CD14-positive monocyte (primary cell): ENCODE measurements at regions of chr11 and their contacts with region 1.

Region 1: GRCh38 chr11:45105233-45105983 is 41.0 kb upstream of the PRDM11 start:
- DNase-seq: peak; percentile 51 to 66 (median 62)
- H3K4me3 ChIP-seq: no peak overlapping the region
- H3K4me3 Mint-ChIP-seq: no peak overlapping the region
- H3K27ac ChIP-seq: no peak overlapping the region
- H3K27ac Mint-ChIP-seq: peak overlapping the region in 1 of 7 donors; percentile 60
- H3K4me1 ChIP-seq: peaks cover 11 to 14% of the 10 kb centered on the region in 2 donors
- H3K4me1 Mint-ChIP-seq: peaks cover 24% of the 10 kb centered on the region
- H3K27me3 ChIP-seq: no peaks in the 10 kb centered on the region
- H3K27me3 Mint-ChIP-seq: peaks cover 1 to 5% (median 3%) of the 10 kb centered on the region in 3 donors
- CTCF ChIP-seq: peak; percentile 99

Region 2: GRCh38 chr11:44927174-44927661 is 178.2 kb before region 1 on chr11:
- intact Hi-C with region 1: loop called in 1 of 2 experiments (anchors 2 kb)
- DNase-seq: peak; percentile 37 to 56 (median 44)
- H3K4me3 ChIP-seq: no peak overlapping the region
- H3K4me3 Mint-ChIP-seq: peak overlapping the region in 1 of 2 donors; percentile 42
- H3K27ac ChIP-seq: no peak overlapping the region
- H3K27ac Mint-ChIP-seq: no peak overlapping the region
- H3K4me1 ChIP-seq: no peaks in the 10 kb centered on the region
- H3K4me1 Mint-ChIP-seq: no peaks in the 10 kb centered on the region
- H3K27me3 ChIP-seq: no peaks in the 10 kb centered on the region
- H3K27me3 Mint-ChIP-seq: peaks cover 5 to 14% (median 9%) of the 10 kb centered on the region in 3 donors
- CTCF ChIP-seq: peak; percentile 96

Region 3: DNA sequence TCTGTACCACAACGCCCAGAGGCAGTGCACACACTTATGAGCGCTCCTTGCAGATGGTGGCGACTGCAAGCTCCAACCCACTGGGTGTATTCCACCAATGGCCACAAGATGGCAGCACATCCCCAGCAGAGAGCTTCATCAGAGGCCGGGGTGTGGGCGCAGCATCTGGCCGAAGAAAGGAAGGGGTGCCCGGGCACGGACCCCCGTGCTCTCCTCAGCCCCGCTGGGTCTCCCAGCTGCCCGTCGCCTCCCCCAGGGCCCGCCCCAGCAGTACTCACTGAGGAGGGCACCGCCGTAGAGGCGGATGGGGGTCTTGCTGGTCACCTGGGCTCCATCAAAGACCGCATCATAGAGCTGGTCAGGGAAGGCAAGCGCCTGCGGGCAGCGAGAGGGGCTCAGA is 168.9 kb before region 1 on chr11:
- intact Hi-C with region 1: loop called (anchors 1 kb)
- DNase-seq: peak; percentile 71 to 77 (median 73)
- H3K4me3 ChIP-seq: no peak overlapping the region
- H3K4me3 Mint-ChIP-seq: no peak overlapping the region
- H3K27ac ChIP-seq: no peak overlapping the region
- H3K27ac Mint-ChIP-seq: no peak overlapping the region
- H3K4me1 ChIP-seq: peaks cover 12 to 14% of the 10 kb centered on the region in 2 donors
- H3K4me1 Mint-ChIP-seq: peaks cover 16% of the 10 kb centered on the region
- H3K27me3 ChIP-seq: no peaks in the 10 kb centered on the region
- H3K27me3 Mint-ChIP-seq: peaks cover 1 to 3% (median 2%) of the 10 kb centered on the region in 3 donors
- CTCF ChIP-seq: peak; percentile 94